HCT116 (cell line): ENCODE measurements at regions of chr7 and their contacts with region 1.

Region 1: DNA sequence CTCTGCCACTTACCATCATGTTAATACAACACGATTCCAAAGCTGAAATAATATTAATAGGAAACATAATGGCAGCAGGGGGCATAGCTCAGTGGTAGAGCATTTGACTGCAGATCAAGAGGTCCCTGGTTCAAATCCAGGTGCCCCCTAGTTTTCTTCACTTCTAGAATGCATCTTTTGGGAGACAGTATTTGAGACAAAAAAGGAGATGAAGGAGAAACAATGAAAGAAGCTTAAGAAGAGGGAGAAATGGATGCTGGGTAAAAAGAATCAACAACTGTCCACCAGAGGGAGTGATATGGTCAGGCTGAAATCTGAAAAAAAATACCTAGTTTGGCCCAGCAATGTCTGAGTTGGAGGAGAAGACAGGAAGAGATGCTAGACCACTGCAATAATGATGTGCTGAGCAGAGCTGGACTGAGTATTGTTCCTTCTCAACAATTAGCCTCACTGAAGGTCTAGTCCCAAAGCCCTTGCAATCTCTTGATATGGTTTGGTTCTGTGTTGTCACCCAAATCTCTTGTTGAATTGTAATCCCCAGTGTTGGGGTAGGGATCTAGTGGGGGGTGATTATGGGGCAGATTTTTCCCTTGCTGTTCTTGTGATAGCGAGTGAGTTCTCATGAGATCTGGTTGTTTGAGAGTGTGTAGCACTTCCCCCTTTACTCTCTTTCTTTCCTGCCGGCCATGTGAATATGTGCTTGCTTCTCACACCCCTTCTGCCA is 48.3 kb downstream of the ZNF783 start:
- DNase-seq: peak; percentile 91
- ATAC-seq: peak; percentile 91
- H3K4me3 ChIP-seq: no peak overlapping the region
- H3K27ac ChIP-seq: no peak overlapping the region
- H3K4me1 ChIP-seq: no peaks in the 10 kb centered on the region
- H3K27me3 ChIP-seq: no peaks in the 10 kb centered on the region
- CTCF ChIP-seq: peak; percentile 60 to 97 (median 80)
- POLR2A ChIP-seq: no peak
- RAD21 ChIP-seq: peak; percentile 86

Region 2: GRCh38 chr7:149060156-149060555 is 250.1 kb before region 1 on chr7:
- CTCF ChIA-PET with region 1: no interaction called
- POLR2A ChIA-PET with region 1: no interaction called
- RAD21 ChIA-PET with region 1: no interaction called
- intact Hi-C with region 1: no loop called
- DNase-seq: no peak
- ATAC-seq: no peak
- H3K4me3 ChIP-seq: no peak overlapping the region
- H3K27ac ChIP-seq: no peak overlapping the region
- H3K4me1 ChIP-seq: peaks cover 3 to 19% of the 10 kb centered on the region in 2 experiments; a peak in 3 of 4 replicates
- H3K27me3 ChIP-seq: no peaks in the 10 kb centered on the region
- CTCF ChIP-seq: no peak
- POLR2A ChIP-seq: no peak
- RAD21 ChIP-seq: no peak

Region 3: GRCh38 chr7:149355390-149356048 is 45.2 kb after region 1 on chr7:
- CTCF ChIA-PET with region 1: interaction called, 4 read pairs
- POLR2A ChIA-PET with region 1: no interaction called
- RAD21 ChIA-PET with region 1: no interaction called
- intact Hi-C with region 1: loop called (anchors 1 kb)
- DNase-seq: peak; percentile 70
- ATAC-seq: peak; percentile 88
- H3K4me3 ChIP-seq: no peak overlapping the region
- H3K27ac ChIP-seq: no peak overlapping the region; the same call in 1 of the 2 replicates
- H3K4me1 ChIP-seq: peaks cover 0 to 21% of the 10 kb centered on the region in 2 experiments; a peak in 1 of 4 replicates
- H3K27me3 ChIP-seq: no peaks in the 10 kb centered on the region
- CTCF ChIP-seq: peak; percentile 13 to 36 (median 25); a peak in 3 of 6 replicates
- POLR2A ChIP-seq: no peak
- RAD21 ChIP-seq: peak; percentile 32; the same call in 1 of the 2 replicates

Region 4: DNA sequence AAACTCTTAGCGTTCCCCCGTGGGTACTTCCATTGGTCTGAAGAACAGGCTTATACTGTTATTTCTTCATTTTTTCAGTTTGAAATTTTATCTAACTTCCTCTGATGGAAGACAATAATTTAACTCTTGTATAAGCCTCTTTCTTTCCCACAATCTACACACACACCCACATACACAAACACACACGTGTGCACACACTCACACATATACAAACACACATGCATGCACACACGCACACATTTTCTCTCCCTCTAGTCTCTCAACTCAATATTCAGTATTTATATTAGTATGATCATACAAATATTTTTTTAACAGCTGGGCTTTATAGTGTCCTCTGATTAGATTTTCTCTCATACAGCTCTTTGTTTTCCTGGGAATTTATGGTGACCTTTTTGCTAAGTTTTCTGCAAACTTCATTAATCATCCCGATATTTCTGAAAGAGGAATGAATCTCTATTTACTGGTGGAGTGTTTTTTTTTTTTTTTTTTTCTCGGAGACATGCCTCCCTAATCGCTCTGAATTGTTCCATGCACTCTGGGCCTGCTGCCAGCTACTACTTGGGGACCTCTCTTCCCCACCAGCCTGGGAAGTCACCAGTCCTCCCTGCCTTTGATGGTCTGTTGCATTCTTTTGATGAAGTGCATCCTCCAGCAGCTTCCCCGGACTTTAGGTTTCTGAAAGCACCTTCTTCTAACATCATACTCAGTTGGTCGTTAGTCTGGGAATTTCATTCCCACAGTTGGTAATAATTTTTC is 75.1 kb after region 1 on chr7:
- CTCF ChIA-PET with region 1: no interaction called
- POLR2A ChIA-PET with region 1: no interaction called
- RAD21 ChIA-PET with region 1: no interaction called
- intact Hi-C with region 1: no loop called
- DNase-seq: no peak
- ATAC-seq: no peak
- H3K4me3 ChIP-seq: no peak overlapping the region
- H3K27ac ChIP-seq: no peak overlapping the region
- H3K4me1 ChIP-seq: no peaks in the 10 kb centered on the region
- H3K27me3 ChIP-seq: no peaks in the 10 kb centered on the region
- CTCF ChIP-seq: no peak
- POLR2A ChIP-seq: no peak
- RAD21 ChIP-seq: no peak

Region 5: GRCh38 chr7:149422129-149422913 is 112.0 kb after region 1 on chr7:
- CTCF ChIA-PET with region 1: interaction called, 3 read pairs
- POLR2A ChIA-PET with region 1: no interaction called
- RAD21 ChIA-PET with region 1: no interaction called
- intact Hi-C with region 1: loop called (anchors 1 kb)
- DNase-seq: peak; percentile 53
- ATAC-seq: peak; percentile 98
- H3K4me3 ChIP-seq: peak overlapping the region; percentile 36 to 52
- H3K27ac ChIP-seq: peak overlapping the region; percentile 20; the same call in 1 of the 2 replicates
- H3K4me1 ChIP-seq: peaks cover 4 to 8% of the 10 kb centered on the region in 2 experiments; a peak in 2 of 4 replicates
- H3K27me3 ChIP-seq: no peaks in the 10 kb centered on the region
- CTCF ChIP-seq: peak; percentile 28 to 91 (median 62)
- POLR2A ChIP-seq: no peak
- RAD21 ChIP-seq: peak; percentile 58

Region 6: DNA sequence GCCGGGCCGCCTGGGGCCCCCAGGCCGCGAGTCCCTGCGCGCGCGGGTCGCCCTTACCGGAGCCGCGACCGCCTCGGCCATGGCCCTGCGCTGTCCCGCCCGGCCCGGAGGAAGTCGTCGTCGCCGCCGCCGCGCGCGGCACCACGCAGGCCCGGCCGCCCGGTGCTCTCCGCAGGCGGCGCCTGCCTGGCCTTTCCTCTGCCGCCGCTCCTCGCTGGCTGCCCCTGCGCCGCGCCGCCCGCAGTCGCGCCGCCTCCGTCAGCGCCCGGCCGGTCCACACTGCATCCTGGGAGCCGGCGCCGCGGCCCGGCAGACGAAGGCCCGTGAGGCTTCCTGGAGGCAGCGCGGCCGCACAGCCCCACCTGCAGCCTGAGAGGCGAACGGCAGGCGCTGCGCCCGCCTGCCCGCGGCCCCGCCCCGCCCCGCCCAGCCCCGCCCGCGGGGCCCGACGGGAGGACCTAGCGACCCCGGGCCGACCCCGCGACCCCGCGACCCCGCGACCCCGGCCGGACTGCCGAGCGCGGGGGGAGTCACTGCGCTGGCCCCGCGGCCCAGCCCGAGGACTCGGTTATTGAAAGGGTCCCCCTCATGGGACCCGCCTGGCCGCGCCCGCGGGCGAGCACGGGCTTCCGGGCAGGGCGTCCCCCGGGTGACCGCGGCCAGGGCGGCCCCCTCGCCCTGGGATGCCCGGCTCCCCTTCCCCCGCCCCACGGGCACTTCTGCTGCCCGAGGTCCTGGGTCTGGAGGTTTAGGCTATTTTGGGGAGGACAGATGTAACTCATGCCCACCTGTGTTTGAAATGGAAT is 187.4 kb after region 1 on chr7 and contains the start of gene ZNF746:
- CTCF ChIA-PET with region 1: no interaction called
- POLR2A ChIA-PET with region 1: no interaction called
- RAD21 ChIA-PET with region 1: no interaction called
- intact Hi-C with region 1: loop called (anchors 2 kb)
- DNase-seq: peak; percentile 41
- ATAC-seq: peak; percentile 91
- H3K4me3 ChIP-seq: peak within 1 kb of the TSS; percentile 80 to 88
- H3K27ac ChIP-seq: peak within 1 kb of the TSS; percentile 86
- H3K4me1 ChIP-seq: peaks cover 8 to 20% of the 10 kb centered on the region in 2 experiments
- H3K27me3 ChIP-seq: no peaks in the 10 kb centered on the region
- CTCF ChIP-seq: peak; percentile 34 to 57 (median 49); a peak in 4 of 6 replicates
- POLR2A ChIP-seq: peak; percentile 64
- RAD21 ChIP-seq: peak; percentile 68
- total RNA-seq, gene ZNF746: 18.7 TPM

Region 7: GRCh38 chr7:149598721-149599306 is 288.5 kb after region 1 on chr7:
- CTCF ChIA-PET with region 1: interaction called, 8 read pairs
- POLR2A ChIA-PET with region 1: no interaction called
- RAD21 ChIA-PET with region 1: no interaction called
- intact Hi-C with region 1: loop called (anchors 1 kb)
- DNase-seq: peak; percentile 16
- ATAC-seq: peak; percentile 87
- H3K4me3 ChIP-seq: no peak overlapping the region
- H3K27ac ChIP-seq: no peak overlapping the region
- H3K4me1 ChIP-seq: no peaks in the 10 kb centered on the region
- H3K27me3 ChIP-seq: no peaks in the 10 kb centered on the region
- CTCF ChIP-seq: peak; percentile 60 to 67 (median 61)
- POLR2A ChIP-seq: no peak
- RAD21 ChIP-seq: peak; percentile 74